Activated T-helper 1 cell treated with anti-CD3 and anti-CD28 coated beads, Interleukin-12 subunit alpha, Interleukin-12 subunit beta, Interleukin-2, Interleukin-4 antibody, amounts not matched to agents 30 ng/mL and 10 ng/mL and 1 ng/mL, durations not matched to agents 14 hours and 24 hours and 36 hours (primary cell): ENCODE measurements at regions of chr4 and their contacts with region 1.

Region 1: DNA sequence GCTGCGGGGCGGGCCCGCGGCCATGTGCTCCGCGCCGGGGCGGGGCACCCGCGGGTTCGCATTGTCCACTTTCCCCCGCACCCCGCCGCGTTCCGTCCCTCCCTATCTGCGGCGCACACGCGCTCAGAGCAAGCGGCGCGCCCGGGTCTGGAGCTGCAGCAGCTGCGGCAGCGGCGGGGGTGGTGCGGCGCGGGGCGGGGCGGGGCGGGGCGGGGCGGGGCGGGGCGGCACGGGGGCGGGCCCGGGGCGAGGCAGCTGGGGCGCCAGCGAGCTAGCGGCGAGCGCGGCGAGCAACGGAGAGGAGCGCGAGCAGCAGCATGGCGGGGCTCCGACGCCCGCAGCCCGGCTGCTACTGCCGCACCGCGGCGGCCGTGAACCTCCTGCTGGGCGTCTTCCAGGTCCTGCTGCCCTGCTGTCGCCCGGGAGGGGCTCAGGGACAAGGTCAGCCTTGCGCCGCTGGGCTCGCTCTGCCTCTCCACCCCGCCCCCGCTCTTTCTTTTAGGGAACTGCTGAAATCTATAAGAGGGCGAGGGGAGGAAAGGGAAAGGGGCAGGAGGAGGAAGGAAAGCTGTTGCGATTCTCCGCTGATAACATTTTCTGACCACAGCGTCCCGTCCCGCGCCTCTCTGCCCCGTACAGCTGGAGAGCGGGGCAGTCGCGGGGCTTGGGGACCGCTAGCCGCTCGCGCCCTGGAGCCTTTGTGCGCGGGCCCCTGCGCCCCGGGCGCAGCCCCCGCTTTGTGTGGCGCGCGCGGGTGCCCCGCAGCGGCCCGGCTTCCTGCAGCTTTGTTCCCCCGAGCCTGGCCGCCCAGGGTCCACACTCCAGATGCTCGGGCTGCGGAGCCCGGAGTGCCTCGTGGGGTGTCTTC is at the start of gene TMEM131L:
- DNase-seq: peak; percentile 63
- H3K4me3 Mint-ChIP-seq: peak within 1 kb of the TSS; percentile 89
- H3K27ac Mint-ChIP-seq: peak within 1 kb of the TSS; percentile 90
- H3K4me1 Mint-ChIP-seq: peaks cover 50% of the 10 kb centered on the region
- H3K27me3 Mint-ChIP-seq: no peaks in the 10 kb centered on the region
- total RNA-seq, gene TMEM131L: 39.5 and 42.2 TPM in 2 replicates

Region 2: GRCh38 chr4:153450544-153450917 is 15.8 kb before region 1 on chr4:
- intact Hi-C with region 1: loop called (anchors 1 kb)
- DNase-seq: no peak
- H3K4me3 Mint-ChIP-seq: peak overlapping the region; percentile 60
- H3K27ac Mint-ChIP-seq: peak overlapping the region; percentile 78
- H3K4me1 Mint-ChIP-seq: peaks cover 18% of the 10 kb centered on the region
- H3K27me3 Mint-ChIP-seq: no peaks in the 10 kb centered on the region

Region 3: GRCh38 chr4:153521999-153522801 is 55.9 kb after region 1 on chr4:
- intact Hi-C with region 1: loop called (anchors 1 kb)
- DNase-seq: peak; percentile 54
- H3K4me3 Mint-ChIP-seq: peak overlapping the region; percentile 60
- H3K27ac Mint-ChIP-seq: peak overlapping the region; percentile 91
- H3K4me1 Mint-ChIP-seq: peaks cover 89% of the 10 kb centered on the region
- H3K27me3 Mint-ChIP-seq: no peaks in the 10 kb centered on the region